ENCODE measurements at regions of chr6 and their contacts with region 1.

Region 1: GRCh38 chr6:108592371-108593337 is 31.9 kb downstream of the FOXO3 start:
- DNase-seq: peak in 1 of 5 donors; percentile 54
- H3K4me3 ChIP-seq: peak overlapping the region; percentile 13
- H3K27ac ChIP-seq: peak overlapping the region; percentile 22 to 32
- H3K4me1 ChIP-seq: peaks cover 42% of the 10 kb centered on the region
- H3K27me3 ChIP-seq: no peaks in the 10 kb centered on the region
- CTCF ChIP-seq: no peak
- EP300 ChIP-seq: peak; percentile 43
- POLR2A ChIP-seq: no peak

Region 2: DNA sequence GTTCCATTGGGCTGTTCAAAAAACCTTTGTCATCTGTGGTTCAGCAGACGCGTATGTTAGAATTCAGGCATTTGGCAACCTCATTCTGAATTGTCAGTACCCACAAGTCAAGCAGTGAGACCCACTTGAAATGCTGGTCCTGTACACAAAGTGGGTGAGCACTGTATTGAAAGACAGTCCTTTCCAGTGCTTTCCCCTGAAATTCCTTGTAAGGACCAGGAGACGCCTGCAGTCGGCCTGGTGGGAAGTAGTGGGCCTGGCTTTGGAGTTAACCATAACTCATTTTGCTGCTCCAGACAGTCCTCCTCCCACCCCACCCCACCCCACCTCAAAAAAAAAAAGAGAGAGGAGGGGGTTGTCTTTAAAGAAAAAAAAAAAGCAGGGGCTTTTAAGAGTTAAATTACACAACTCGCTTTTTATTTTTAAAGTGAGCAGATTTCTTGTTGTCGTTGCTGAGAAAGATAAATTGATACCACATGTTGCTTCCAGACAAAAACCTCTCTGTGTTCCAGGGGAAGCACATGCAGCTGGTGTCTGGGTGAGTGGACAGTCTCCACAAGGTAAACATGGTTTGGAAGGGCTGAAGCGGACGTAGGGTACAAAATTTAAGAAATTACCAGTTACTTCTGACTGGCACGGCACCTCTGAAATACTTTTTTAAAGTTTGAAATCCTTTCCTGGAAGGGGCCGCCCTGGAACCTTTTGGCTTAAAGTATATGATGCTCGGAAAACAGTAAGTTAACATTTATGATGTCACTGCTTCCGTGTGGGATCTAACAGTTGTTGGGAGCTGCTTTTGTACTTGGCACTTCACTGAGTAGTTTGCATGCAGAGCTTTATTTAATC is 63.4 kb after region 1 on chr6:
- intact Hi-C with region 1: loop called in 2 of 4 experiments (anchors 5 to 10 kb)
- DNase-seq: peak in 3 of 5 donors; percentile 28 to 50 (median 38)
- H3K4me3 ChIP-seq: peak overlapping the region; percentile 23
- H3K27ac ChIP-seq: peak overlapping the region; percentile 11 to 63
- H3K4me1 ChIP-seq: peaks cover 38% of the 10 kb centered on the region
- H3K27me3 ChIP-seq: no peaks in the 10 kb centered on the region
- CTCF ChIP-seq: no peak
- EP300 ChIP-seq: no peak
- POLR2A ChIP-seq: no peak

Region 3: GRCh38 chr6:109610590-109610989 is 1017.9 kb after region 1 on chr6:
- intact Hi-C with region 1: no loop called
- DNase-seq: no peak
- H3K4me3 ChIP-seq: no peak overlapping the region
- H3K27ac ChIP-seq: no peak overlapping the region
- H3K4me1 ChIP-seq: no peaks in the 10 kb centered on the region
- H3K27me3 ChIP-seq: no peaks in the 10 kb centered on the region
- CTCF ChIP-seq: no peak
- EP300 ChIP-seq: no peak
- POLR2A ChIP-seq: no peak

Measured in ovary (tissue), 10 donors.